Posterior vena cava (tissue), 2 donors: ENCODE measurements at regions of chrX and their contacts with region 1.

Region 1: GRCh38 chrX:48700951-48701653 is 4.6 kb downstream of the SUV39H1 start:
- DNase-seq: no peak

Region 2: GRCh38 chrX:48648336-48648751 is 52.8 kb before region 1 on chrX:
- intact Hi-C with region 1: no loop called
- DNase-seq: no peak

Region 3: DNA sequence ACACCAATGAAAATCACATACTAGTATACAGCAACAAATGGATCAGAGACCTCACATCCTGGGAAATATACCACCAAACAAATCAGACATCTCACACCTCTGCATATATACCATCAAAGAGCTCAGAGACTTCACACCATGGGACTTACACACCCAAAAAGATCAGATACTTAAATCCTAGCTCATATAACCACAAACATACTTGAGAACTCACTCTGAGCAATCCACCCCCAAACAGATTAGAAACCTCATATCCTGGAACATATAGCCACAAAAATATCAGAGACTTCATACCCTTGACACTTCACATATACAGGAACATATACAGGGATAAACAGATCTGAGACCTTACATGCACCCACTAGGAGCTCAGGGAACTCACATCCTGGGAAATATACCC is 27.6 kb after region 1 on chrX:
- intact Hi-C with region 1: loop called in 1 of 2 experiments (anchors 1 kb)
- DNase-seq: no peak